ENCODE measurements at regions of chr4 and their contacts with region 1.

Region 1: GRCh38 chr4:87006676-87007527 is 72.1 kb downstream of the AFF1 start:
- DNase-seq: peak; percentile 94
- H3K4me3 ChIP-seq: peak overlapping the region; percentile 79
- H3K27ac ChIP-seq: peak overlapping the region; percentile 86
- H3K4me1 ChIP-seq: peaks cover 66% of the 10 kb centered on the region
- CTCF ChIP-seq: no peak; the same call in 1 of the 2 replicates

Region 2: DNA sequence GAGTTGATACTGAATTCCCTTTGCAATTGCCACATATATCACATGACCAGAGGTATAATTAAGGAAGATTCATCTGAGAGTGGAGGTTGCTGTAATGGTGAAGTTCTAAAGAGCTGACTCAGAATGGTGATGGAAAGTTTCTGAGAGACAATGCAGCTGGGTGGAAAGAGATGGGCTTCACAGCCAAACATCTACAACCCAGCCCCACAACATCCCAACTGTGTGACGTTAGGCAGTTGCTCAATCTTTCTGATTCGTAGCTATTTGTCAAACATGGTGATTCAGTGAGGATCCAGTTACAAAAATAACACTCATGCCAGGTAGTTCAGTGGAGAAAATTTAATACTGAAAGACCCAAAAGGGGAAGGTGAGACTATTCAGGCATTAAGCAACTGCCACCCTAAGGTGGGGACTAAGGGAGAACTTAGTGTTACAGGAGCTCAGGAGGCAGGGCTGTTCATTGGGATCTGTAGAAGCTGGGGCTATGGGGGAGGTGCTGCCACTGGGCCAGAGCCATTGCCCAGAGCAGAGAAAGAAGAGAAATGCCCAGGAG is 79.0 kb before region 1 on chr4:
- CTCF ChIA-PET with region 1: interaction called, 7 read pairs
- POLR2A ChIA-PET with region 1: interaction called, 11 read pairs
- intact Hi-C with region 1: no loop called
- DNase-seq: no peak
- H3K4me3 ChIP-seq: no peak overlapping the region
- H3K27ac ChIP-seq: peak overlapping the region; percentile 5
- H3K4me1 ChIP-seq: peaks cover 48% of the 10 kb centered on the region
- CTCF ChIP-seq: no peak

Region 3: DNA sequence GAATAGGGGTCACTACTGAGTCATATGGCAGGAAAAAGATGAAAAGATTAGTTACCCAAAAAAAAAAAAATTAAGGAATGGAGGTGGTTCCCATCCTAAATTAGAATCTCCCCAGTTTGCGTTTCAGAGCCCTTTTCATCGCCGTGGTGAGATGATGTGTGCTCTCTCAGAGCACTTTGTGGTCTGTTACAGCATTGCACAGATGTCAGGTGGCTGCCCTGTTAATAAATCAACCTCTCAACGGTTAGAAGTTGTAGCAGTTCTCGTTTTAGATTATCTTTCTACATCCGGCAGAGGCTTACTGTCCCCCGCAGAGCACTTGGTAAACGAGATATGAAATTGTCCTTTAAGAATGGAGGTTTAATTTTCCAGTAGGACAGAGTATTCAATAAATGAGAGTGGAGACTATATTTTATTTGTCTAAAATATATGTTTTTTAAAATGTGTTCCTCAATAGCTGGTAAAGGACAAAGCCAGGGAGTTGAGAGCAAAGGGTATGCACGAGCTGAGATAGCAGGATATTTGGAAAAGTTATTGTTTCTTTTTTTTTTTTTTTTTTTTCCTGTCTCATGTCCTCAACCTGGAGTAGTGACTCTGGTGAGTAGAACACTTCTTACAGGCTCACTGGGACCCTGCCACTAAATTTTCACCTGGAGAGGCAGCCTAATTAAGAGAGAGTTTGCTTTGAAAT is 45.2 kb before region 1 on chr4:
- CTCF ChIA-PET with region 1: interaction called, 3 read pairs
- POLR2A ChIA-PET with region 1: interaction called, 50 read pairs
- intact Hi-C with region 1: loop called (anchors 1 kb)
- DNase-seq: peak; percentile 95
- H3K4me3 ChIP-seq: peak overlapping the region; percentile 61
- H3K27ac ChIP-seq: peak overlapping the region; percentile 100
- H3K4me1 ChIP-seq: peaks cover 96% of the 10 kb centered on the region
- CTCF ChIP-seq: no peak

Region 4: DNA sequence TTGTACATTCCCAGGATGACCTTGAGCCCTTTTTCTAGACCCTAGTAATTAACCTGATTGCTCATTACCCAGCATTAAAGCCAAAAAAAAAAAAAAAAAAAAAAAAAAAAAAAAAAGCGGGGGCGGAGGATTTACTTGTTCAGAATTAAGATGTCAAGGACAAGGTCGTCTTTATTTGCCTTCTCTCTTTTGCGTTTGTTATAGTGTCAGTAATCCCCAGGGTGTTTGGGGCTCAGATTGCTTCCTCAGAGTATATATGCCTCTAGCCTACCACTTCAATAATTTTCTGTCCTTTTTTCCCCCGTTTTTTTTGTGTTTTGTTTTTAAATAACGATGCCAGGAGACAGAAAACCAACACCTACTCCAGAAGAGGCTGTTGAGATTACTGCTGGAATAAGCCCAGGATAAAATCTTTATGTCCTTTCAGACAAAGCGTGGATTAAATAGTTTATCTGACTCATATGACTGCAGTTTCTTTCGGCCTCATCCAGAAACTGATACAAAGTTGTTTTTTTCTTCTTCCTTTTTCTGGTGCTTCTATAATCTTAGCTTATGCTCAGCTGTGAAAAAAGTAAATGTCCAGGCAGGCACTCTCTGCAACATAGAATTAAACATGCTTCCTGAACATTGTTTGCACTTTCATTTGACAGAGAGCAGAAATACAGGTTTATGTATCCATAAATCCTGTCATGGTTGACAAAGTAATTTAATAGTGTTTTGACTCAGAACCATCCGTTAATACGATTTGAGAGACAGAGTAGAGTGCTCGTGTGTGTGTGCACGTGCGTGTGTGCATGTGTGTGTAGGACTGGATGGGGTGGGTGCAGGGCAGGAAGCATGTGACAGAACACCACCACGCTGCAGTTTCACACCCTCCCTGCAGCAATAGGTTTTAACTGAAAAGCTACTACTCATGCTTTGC is 66.6 kb after region 1 on chr4:
- CTCF ChIA-PET with region 1: no interaction called
- POLR2A ChIA-PET with region 1: interaction called, 5 read pairs
- intact Hi-C with region 1: loop called (anchors 2 kb)
- DNase-seq: peak; percentile 82
- H3K4me3 ChIP-seq: peak overlapping the region; percentile 60
- H3K27ac ChIP-seq: peak overlapping the region; percentile 93
- H3K4me1 ChIP-seq: peaks cover 46% of the 10 kb centered on the region
- CTCF ChIP-seq: 0 out of 2 replicates have a peak, but pooled peaks have one; percentile 8

Region 5: GRCh38 chr4:87166296-87166854 is 159.5 kb after region 1 on chr4:
- CTCF ChIA-PET with region 1: no interaction called
- POLR2A ChIA-PET with region 1: no interaction called
- intact Hi-C with region 1: no loop called
- DNase-seq: no peak
- H3K4me3 ChIP-seq: no peak overlapping the region
- H3K27ac ChIP-seq: no peak overlapping the region
- H3K4me1 ChIP-seq: no peaks in the 10 kb centered on the region
- CTCF ChIP-seq: no peak

Region 6: GRCh38 chr4:87220094-87220822 is 213.4 kb after region 1 on chr4 and contains the start of gene KLHL8:
- CTCF ChIA-PET with region 1: no interaction called
- POLR2A ChIA-PET with region 1: no interaction called
- intact Hi-C with region 1: loop called (anchors 1 kb)
- DNase-seq: peak; percentile 90
- H3K4me3 ChIP-seq: peak within 1 kb of the TSS; percentile 95
- H3K27ac ChIP-seq: peak within 1 kb of the TSS; percentile 77
- H3K4me1 ChIP-seq: peaks cover 26% of the 10 kb centered on the region
- CTCF ChIP-seq: peak; percentile 35
- total RNA-seq, gene KLHL8: 9.0 and 12.6 TPM in 2 replicates

Region 7: GRCh38 chr4:87251106-87251505 is 244.2 kb after region 1 on chr4:
- CTCF ChIA-PET with region 1: no interaction called
- POLR2A ChIA-PET with region 1: no interaction called
- intact Hi-C with region 1: no loop called
- DNase-seq: no peak
- H3K4me3 ChIP-seq: no peak overlapping the region
- H3K27ac ChIP-seq: no peak overlapping the region
- H3K4me1 ChIP-seq: no peaks in the 10 kb centered on the region
- CTCF ChIP-seq: no peak

Region 8: GRCh38 chr4:87375719-87376291 is 368.9 kb after region 1 on chr4:
- CTCF ChIA-PET with region 1: no interaction called
- POLR2A ChIA-PET with region 1: no interaction called
- intact Hi-C with region 1: no loop called
- DNase-seq: peak; percentile 45
- H3K4me3 ChIP-seq: no peak overlapping the region
- H3K27ac ChIP-seq: no peak overlapping the region
- H3K4me1 ChIP-seq: no peaks in the 10 kb centered on the region
- CTCF ChIP-seq: peak; percentile 95